Gastrocnemius medialis (tissue), 4 donors: ENCODE measurements at regions of chrX and their contacts with region 1.

Region 1: DNA sequence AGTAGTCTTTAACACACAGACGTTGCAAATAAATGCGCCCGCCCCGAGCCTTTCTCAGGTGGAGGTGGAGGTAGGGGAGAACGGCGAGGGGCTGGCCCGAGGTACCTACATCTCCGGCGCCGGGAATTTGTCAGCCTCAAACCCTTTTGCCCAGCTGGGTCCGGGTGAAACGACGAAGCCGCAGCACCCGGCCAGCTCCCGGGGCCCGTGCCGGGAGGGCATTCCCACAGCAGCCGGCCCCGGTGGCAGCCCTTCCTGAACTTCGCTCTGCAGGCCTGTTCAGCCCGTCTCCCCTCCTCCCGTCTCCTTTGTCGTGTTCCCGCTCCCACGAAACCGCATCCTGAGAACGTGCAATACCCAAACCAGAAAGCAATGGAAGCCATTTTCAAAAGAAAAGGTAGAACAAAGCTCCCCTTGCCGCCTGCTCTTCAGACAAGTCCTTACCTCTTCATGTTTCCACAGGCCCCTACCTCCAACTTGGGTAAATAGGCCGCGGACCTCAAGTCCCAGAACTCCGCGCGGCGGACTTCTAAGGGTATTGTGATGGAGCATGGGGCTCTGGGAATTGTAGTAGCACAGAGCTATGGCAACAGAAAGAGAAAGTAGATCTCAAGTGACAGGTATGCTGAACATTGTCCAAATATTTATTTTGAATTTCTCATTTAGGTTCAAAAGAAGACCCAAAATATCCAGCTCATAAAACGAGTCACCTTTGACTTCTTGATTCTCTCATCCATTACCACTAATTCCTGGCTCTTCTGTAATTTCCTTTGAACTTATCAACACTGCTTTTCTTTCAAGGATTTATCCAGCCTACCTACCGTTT is at the start of gene RBM41:
- DNase-seq: peak; percentile 49 to 72
- ATAC-seq: peak; percentile 99
- H3K4me3 ChIP-seq: peak within 1 kb of the TSS; percentile 62 to 83 (median 74)
- H3K27ac ChIP-seq: peak within 1 kb of the TSS; percentile 75 to 83 (median 78)
- H3K4me1 ChIP-seq: peaks cover 5 to 10% of the 10 kb centered on the region in 2 donors
- H3K27me3 ChIP-seq: no peaks in the 10 kb centered on the region
- CTCF ChIP-seq: no peak
- POLR2A ChIP-seq: no peak
- total RNA-seq, gene RBM41: 9.9 to 16.0 (median 13.2) TPM

Region 2: GRCh38 chrX:107000013-107000515 is 118.5 kb before region 1 on chrX and contains the start of gene MORC4:
- in situ Hi-C with region 1: no loop called
- intact Hi-C with region 1: loop called (anchors 5 kb)
- DNase-seq: peak; percentile 50 to 68
- ATAC-seq: peak; percentile 90 to 91
- H3K4me3 ChIP-seq: peak within 1 kb of the TSS; percentile 53 to 61 (median 60)
- H3K27ac ChIP-seq: peak within 1 kb of the TSS; percentile 55 to 69 (median 64)
- H3K4me1 ChIP-seq: no peaks in the 10 kb centered on the region
- H3K27me3 ChIP-seq: no peaks in the 10 kb centered on the region
- CTCF ChIP-seq: no peak
- POLR2A ChIP-seq: peak; percentile 52 to 73
- total RNA-seq, gene MORC4: 5.0 to 10.0 (median 8.4) TPM

Region 3: DNA sequence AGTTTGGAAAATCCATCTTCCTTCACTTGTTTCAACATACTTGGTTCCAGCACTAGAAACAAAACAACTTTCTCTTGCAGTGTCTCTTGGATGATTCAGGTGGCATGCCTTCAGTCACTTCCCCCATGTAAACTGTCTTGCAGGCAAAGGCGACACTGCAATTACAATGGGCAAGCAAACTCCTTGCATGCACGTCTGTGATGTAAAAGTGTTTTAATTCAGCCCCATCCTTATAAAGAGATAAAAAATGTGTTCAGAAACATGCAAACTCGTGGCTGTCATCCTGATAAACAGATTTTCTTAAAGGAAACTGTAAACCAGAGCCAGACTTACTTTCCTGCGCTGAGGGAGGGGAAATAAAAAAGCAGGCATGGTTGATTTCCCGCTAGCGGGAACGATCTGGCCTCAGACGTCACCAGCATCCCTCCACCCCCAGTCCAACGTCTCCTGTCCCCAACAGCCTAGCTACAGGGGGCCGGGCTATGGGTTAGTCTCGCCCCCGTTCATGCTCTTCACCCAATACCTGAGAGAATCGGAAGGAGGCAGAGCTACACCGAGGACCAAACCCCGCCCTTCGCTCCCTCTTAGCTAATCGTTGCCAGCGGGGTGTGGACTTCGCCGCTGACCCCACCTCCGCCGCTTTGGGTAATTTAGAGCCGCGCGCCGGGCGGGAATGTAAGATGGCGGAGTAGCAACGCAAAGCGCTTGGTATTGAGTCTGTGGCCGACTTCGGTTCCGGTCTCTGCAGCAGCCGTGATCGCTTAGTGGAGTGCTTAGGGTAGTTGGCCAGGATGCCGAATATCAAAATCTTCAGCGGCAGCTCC is 509.5 kb after region 1 on chrX and contains the start of gene PRPS1:
- in situ Hi-C with region 1: no loop called
- intact Hi-C with region 1: loop called (anchors 5 kb)
- DNase-seq: peak; percentile 81 to 87
- ATAC-seq: peak; percentile 94 to 98
- H3K4me3 ChIP-seq: peak within 1 kb of the TSS; percentile 57 to 76 (median 71)
- H3K27ac ChIP-seq: peak within 1 kb of the TSS; percentile 73 to 90 (median 84)
- H3K4me1 ChIP-seq: peaks cover 0 to 10% of the 10 kb centered on the region in 2 donors
- H3K27me3 ChIP-seq: no peaks in the 10 kb centered on the region
- CTCF ChIP-seq: no peak
- POLR2A ChIP-seq: peak; percentile 72 to 85
- total RNA-seq, gene PRPS1: 19.6 to 46.0 (median 30.9) TPM

Region 4: GRCh38 chrX:108091266-108091877 is 972.8 kb after region 1 on chrX and contains the starts of genes ATG4A and PSMD10:
- in situ Hi-C with region 1: no loop called
- intact Hi-C with region 1: loop called (anchors 10 kb)
- DNase-seq: peak; percentile 90 to 94
- ATAC-seq: peak; percentile 95 to 97
- H3K4me3 ChIP-seq: peak within 1 kb of the TSS; percentile 60 to 77 (median 74)
- H3K27ac ChIP-seq: peak within 1 kb of the TSS; percentile 82 to 89 (median 86)
- H3K4me1 ChIP-seq: peaks cover 3 to 13% of the 10 kb centered on the region in 2 donors
- H3K27me3 ChIP-seq: peaks cover 0 to 3% (median 0%) of the 10 kb centered on the region in 3 donors
- CTCF ChIP-seq: no peak
- POLR2A ChIP-seq: peak; percentile 61 to 80
- total RNA-seq, gene ATG4A: 18.3 to 22.1 (median 20.4) TPM
- total RNA-seq, gene PSMD10: 16.5 to 33.5 (median 18.6) TPM